PC-3 (cell line): ENCODE measurements at regions of chr14 and their contacts with region 1.

Region 1: DNA sequence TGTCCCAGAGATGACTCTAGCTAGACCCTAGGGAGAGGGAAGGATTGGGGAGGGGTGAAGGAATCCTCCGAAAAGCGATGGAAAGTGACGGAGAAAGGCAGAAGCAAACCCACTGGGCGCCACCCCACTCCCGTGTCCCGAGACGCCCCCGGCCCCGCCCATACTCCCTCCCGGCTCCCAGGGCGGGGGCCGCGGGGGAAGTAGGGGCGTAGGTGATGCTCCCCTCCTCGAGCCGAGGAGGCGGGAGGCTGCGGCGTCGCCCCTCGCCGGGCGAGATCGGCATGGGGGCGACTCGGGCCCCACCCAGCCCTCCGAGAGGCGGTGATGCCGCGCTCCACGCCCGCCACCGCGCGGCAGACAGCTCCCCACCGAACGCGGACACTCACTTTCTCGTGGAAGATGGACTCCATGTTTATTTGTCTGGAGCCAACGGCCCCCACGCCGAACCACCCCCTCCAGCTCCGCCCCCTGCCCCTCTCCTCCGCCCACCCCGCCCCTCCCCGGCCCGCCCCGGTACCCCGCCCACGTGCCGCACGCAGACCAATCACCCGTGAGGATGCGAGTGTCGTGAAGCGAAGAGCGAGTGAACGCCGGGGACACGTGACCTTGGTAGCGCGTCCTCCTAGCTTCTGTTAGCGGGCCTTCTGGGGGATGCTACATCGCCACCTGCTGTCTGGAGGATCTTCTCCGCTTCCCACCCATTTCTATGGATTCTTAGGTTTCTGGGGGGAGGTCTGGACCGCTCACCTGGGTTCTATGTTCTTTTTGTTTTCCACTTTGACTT is at the start of gene ATXN3:
- DNase-seq: peak; percentile 96
- ATAC-seq: peak; percentile 90
- H3K4me3 ChIP-seq: peak within 1 kb of the TSS; percentile 96
- H3K27ac ChIP-seq: peak within 1 kb of the TSS; percentile 71
- H3K4me1 ChIP-seq: peaks cover 11% of the 10 kb centered on the region
- H3K27me3 ChIP-seq: no peaks in the 10 kb centered on the region
- CTCF ChIP-seq: peak; percentile 68
- total RNA-seq, gene ATXN3: 20.4 and 49.3 TPM in 2 replicates

Region 2: GRCh38 chr14:91229743-91230200 is 876.6 kb before region 1 on chr14:
- CTCF ChIA-PET with region 1: no interaction called
- POLR2A ChIA-PET with region 1: no interaction called
- intact Hi-C with region 1: no loop called
- DNase-seq: peak; percentile 82
- ATAC-seq: peak; percentile 73
- H3K4me3 ChIP-seq: no peak overlapping the region
- H3K27ac ChIP-seq: peak overlapping the region; percentile 89
- H3K4me1 ChIP-seq: peaks cover 49% of the 10 kb centered on the region
- H3K27me3 ChIP-seq: no peaks in the 10 kb centered on the region
- CTCF ChIP-seq: no peak

Region 3: DNA sequence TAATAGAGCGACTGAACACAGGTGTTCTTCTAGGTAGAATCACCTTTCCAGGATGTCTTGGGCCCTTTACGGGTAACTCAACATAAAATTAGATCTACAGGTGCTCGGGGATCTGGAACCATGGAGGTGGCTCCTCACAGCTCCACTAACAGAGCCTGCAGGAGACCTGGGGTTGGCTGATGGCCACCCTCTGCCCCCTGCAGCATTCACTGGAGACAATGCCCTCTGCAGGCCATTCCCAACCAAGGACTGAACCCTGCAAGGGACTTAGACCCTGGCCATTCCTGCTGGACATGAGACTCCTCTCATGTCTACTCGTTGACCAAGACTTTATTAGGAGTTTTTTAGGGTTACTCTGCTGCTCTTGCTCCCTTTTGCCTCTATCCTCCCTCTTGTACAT is 537.7 kb before region 1 on chr14:
- CTCF ChIA-PET with region 1: no interaction called
- POLR2A ChIA-PET with region 1: no interaction called
- intact Hi-C with region 1: no loop called
- DNase-seq: peak; percentile 21
- ATAC-seq: no peak
- H3K4me3 ChIP-seq: no peak overlapping the region
- H3K27ac ChIP-seq: no peak overlapping the region
- H3K4me1 ChIP-seq: no peaks in the 10 kb centered on the region
- H3K27me3 ChIP-seq: no peaks in the 10 kb centered on the region; the same call in 1 of the 2 replicates
- CTCF ChIP-seq: peak; percentile 41; the same call in 1 of the 2 replicates

Region 4: DNA sequence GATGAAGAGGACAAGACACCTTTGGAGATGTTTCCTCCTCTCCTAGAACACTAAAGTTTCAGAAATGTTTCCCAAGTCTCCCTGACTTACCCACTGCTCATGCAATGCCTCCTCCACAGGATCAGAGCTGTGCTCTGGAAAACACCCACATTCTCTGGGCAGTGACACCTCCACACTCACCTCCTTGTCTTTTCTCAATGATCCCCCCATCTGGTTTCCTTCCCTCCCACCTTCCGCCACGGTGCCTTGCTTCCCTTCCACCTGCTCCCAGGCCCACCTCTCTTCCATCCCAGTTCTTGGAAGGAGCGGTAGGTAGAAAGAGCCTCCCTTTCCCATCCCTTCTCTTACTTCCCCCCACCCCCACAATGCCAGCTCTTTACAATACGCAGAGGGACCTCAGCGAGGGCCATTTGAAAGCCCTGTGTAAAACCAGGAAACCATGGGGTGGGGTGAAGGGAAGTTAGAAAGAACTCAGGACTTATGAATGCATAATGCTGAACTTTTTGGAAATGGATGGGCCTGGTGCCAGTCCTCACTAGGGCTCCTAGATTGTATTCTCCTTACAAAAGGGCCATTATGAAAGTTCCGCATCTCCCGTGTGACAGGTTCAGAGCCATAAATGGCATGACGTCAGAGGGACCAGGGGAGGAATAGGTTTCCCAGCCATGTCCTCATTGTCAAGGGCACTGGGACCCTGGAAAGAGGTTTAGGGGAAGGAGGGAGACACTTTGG is 171.6 kb before region 1 on chr14:
- CTCF ChIA-PET with region 1: no interaction called
- POLR2A ChIA-PET with region 1: no interaction called
- intact Hi-C with region 1: no loop called
- DNase-seq: no peak
- ATAC-seq: no peak
- H3K4me3 ChIP-seq: no peak overlapping the region
- H3K27ac ChIP-seq: no peak overlapping the region
- H3K4me1 ChIP-seq: no peaks in the 10 kb centered on the region
- H3K27me3 ChIP-seq: peaks cover 6% of the 10 kb centered on the region; the same call in 1 of the 2 replicates
- CTCF ChIP-seq: no peak

Region 5: GRCh38 chr14:92039719-92040430 is 66.5 kb before region 1 on chr14 and contains the start of gene TRIP11:
- CTCF ChIA-PET with region 1: interaction called, 7 read pairs
- POLR2A ChIA-PET with region 1: interaction called, 15 read pairs
- intact Hi-C with region 1: loop called (anchors 2 kb)
- DNase-seq: peak; percentile 90
- ATAC-seq: peak; percentile 94
- H3K4me3 ChIP-seq: peak within 1 kb of the TSS; percentile 92
- H3K27ac ChIP-seq: peak within 1 kb of the TSS; percentile 83
- H3K4me1 ChIP-seq: peaks cover 18% of the 10 kb centered on the region
- H3K27me3 ChIP-seq: no peaks in the 10 kb centered on the region
- CTCF ChIP-seq: no peak
- total RNA-seq, gene TRIP11: 9.6 and 14.3 TPM in 2 replicates

Region 6: DNA sequence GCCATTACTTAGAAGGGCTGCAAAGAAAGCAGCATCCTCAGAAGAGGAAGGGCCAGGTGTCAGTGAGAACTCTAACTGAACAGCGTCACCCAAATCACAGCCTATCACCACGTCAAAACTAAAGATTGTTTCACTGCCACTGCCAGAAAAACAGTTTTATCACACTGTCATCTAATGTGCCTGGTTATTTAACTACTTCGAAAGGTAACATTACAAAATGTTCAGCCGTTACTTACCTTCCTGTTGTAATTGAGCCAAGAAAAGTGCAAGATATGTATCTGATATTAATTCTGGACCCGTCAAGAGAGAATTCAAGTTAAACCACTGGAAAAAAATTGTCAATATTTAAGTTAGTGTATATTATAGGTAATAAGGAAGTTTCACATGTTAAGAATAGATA is 17.8 kb before region 1 on chr14:
- CTCF ChIA-PET with region 1: no interaction called
- POLR2A ChIA-PET with region 1: no interaction called
- intact Hi-C with region 1: no loop called
- DNase-seq: no peak
- ATAC-seq: no peak
- H3K4me3 ChIP-seq: no peak overlapping the region
- H3K27ac ChIP-seq: no peak overlapping the region
- H3K4me1 ChIP-seq: no peaks in the 10 kb centered on the region
- H3K27me3 ChIP-seq: no peaks in the 10 kb centered on the region
- CTCF ChIP-seq: no peak

Region 7: DNA sequence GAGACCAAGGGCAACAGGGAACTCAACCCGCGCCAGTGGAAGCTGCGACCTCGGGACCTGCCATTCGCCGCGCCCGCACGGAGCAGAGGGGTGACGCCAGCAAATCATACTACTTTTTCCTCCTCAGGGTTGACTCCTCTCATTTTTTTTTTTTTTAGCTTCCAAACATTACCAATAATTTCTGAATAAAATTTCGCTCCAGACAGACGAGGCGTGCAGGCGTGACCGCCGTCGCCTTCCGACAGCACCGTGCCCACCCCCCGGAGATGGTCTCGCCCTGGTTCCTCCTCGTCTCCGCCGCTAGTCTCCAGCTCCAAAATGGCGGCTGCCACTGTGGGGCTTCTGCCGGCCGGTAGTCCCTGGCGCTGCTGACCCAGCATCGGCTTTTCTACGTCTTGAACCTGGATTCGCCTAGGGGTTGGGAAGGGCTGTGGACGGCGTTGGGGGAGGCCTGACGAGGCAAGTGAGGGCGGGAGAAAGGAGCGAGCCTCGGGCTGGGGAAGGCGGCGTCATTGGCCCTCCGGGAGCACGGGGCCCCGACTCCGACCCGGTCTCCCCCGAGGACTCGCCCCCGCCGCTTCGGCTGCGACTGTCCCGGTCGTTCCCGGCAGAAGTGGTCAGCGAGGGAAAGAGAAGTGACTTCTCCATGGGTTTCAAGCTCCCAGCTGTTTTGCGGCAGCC is 15.5 kb after region 1 on chr14 and contains the starts of genes CPSF2 and NDUFB1:
- CTCF ChIA-PET with region 1: interaction called, 18 read pairs
- POLR2A ChIA-PET with region 1: interaction called, 3 read pairs
- intact Hi-C with region 1: loop called (anchors 1 kb)
- DNase-seq: peak; percentile 71
- ATAC-seq: peak; percentile 91
- H3K4me3 ChIP-seq: peak within 1 kb of the TSS; percentile 99
- H3K27ac ChIP-seq: peak within 1 kb of the TSS; percentile 78
- H3K4me1 ChIP-seq: peaks cover 14% of the 10 kb centered on the region; the same call in 1 of the 2 replicates
- H3K27me3 ChIP-seq: no peaks in the 10 kb centered on the region
- CTCF ChIP-seq: no peak
- total RNA-seq, gene CPSF2: 51.5 and 57.9 TPM in 2 replicates
- total RNA-seq, gene NDUFB1: 147 and 248 TPM in 2 replicates